ENCODE measurements at regions of chr6 and their contacts with region 1.

Region 1: GRCh38 chr6:35342258-35343091 is at the start of gene PPARD:
- DNase-seq: peak; percentile 96
- H3K4me3 Mint-ChIP-seq: peak within 1 kb of the TSS; percentile 98
- H3K27ac Mint-ChIP-seq: peak within 1 kb of the TSS; percentile 87
- H3K4me1 Mint-ChIP-seq: peaks cover 35% of the 10 kb centered on the region
- H3K27me3 Mint-ChIP-seq: no peaks in the 10 kb centered on the region
- total RNA-seq, gene PPARD: 27.1 and 29.1 TPM in 2 replicates

Region 2: DNA sequence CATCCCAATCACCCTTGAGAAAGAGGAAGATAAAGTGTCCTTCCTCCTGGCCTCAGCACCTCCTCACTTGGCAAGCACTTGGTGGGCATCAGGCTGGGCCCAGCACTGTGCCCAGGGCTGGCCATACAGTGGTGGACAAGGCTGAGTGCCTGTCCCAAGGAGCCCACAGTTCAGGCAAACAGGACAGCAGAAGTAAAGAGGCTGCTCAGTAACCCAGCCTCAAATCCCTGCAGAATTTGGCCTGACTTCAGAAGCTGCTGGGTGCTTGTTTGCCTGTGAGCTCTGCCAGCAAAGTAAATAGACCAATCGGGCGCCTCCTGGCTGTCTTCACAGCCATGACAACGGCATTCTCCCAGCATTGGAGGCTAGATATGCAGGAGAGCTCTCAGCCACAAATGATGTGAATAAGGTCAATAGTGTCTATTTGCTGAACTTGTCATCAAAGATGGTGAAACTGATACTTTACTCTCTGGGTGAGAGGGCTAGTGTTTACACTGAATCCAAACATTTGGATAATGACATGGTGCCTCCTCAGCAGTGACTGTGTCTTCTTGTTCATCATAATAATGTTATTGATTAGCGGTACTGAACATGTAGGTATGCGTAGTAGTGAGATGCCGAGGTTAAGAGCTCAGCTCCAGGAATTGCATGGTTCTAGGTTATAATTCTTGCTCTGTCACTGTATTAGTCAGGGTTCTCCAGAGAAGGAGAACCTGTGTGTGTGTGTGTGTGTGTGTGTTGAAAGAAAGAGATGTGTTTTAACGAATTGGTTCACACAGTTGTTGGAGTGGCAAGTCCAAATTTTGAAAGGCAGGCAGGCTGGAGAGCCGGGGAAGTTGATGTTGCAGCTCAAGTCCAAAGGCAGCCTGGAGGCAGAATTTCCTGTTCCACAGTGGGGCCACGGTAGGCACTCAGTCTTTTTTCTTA is 72.9 kb after region 1 on chr6:
- intact Hi-C with region 1: loop called (anchors 1 kb)
- DNase-seq: no peak
- H3K4me3 Mint-ChIP-seq: no peak overlapping the region
- H3K27ac Mint-ChIP-seq: peak overlapping the region; percentile 37
- H3K4me1 Mint-ChIP-seq: peaks cover 51% of the 10 kb centered on the region
- H3K27me3 Mint-ChIP-seq: no peaks in the 10 kb centered on the region

Region 3: GRCh38 chr6:35468181-35468979 is 125.9 kb after region 1 on chr6 and contains the start of gene RPL10A:
- intact Hi-C with region 1: loop called (anchors 1 kb)
- DNase-seq: peak; percentile 94
- H3K4me3 Mint-ChIP-seq: peak within 1 kb of the TSS; percentile 91
- H3K27ac Mint-ChIP-seq: peak within 1 kb of the TSS; percentile 98
- H3K4me1 Mint-ChIP-seq: peaks cover 24% of the 10 kb centered on the region
- H3K27me3 Mint-ChIP-seq: no peaks in the 10 kb centered on the region
- total RNA-seq, gene RPL10A: 1,727 and 1,773 TPM in 2 replicates

Measured in activated T-helper 2 cell treated with anti-CD3 and anti-CD28 coated beads, Interferon-gamma antibody, Interleukin-2, Interleukin-4, amounts not matched to agents 10 μg/mL and 5 μg/mL and 100 μg/mL, durations not matched to agents 14 hours and 24 hours and 36 hours (primary cell).